ENCODE measurements at regions of chr14 and their contacts with region 1.

Region 1: DNA sequence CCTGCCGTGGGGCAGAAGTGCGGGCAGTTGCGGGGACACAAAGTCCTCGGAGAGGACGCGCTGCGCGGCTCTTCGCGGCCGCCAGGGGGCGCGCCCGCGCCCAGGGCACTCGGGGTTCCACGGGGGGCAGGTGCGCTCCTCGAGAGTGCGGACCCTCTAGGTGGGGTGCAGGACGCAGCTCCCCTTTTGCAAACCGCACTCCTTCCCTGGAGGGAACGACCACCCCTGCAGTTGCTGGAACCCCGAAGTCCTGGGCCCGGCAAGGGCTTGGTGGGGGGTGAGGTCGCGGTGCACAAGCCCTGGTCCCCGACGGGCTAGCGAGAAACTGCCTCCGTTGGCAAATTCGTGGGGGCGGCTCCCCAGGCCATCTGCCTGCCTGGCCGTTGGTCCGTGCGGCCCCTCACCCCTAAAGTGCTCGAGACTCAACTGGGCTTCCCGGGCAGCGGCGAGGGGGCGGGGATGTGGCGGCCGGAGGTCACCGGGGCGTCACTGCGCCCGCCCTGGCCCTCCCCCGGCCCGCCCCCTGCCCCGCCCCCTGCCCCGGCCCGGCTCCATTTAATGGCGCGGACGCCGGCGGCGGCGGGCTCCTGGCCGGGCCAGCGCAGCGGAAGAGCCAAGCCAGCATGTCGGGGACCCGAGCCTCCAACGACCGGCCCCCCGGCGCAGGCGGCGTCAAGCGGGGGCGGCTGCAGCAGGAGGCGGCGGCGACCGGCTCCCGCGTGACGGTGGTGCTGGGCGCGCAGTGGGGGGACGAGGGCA is at the start of gene ADSS1:
- DNase-seq: peak in 1 of 2 donors; percentile 85
- H3K4me3 ChIP-seq: peak within 1 kb of the TSS; percentile 83 to 94
- H3K27ac ChIP-seq: peak within 1 kb of the TSS; percentile 84 to 89
- H3K4me1 ChIP-seq: peaks cover 24 to 47% of the 10 kb centered on the region in 2 donors
- H3K27me3 ChIP-seq: no peaks in the 10 kb centered on the region
- CTCF ChIP-seq: peak; percentile 80 to 84 (median 83)
- total RNA-seq, gene ADSS1: 30.2 TPM

Region 2: DNA sequence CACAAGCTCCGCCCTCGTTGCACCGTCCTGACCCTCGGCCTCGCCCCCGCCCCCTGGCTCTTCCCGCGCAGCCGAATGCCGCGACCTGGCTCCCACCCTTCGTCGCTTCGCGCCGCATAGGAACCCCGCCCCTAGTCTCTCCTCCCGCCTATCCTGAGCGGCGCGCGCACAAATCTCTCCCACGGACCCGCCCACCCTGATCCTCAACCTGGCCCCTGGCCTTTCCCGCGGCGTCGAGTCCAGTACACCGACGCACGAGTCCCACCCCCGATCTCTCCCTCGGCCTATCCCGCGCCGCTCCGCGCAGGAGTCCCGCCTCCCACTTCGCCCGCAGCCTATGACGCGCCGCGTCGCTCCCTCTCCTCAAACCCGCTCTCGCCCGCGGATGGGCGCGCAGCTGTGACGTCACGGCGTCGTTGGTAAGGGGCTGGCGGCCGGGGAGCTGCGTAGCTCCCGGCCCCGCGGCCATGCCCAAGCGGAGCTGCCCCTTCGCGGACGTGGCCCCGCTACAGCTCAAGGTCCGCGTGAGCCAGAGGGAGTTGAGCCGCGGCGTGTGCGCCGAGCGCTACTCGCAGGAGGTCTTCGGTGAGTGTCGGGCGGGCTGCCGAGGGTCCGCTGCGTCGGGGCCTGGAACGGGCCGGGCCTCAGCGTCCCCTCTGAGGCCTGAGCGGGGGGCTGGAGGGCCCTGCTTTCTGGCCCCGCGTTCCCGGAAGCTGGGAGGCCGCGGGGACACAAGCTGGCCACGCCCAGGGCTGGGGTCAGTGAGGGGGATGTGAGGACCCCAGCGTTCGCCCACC is 29.1 kb after region 1 on chr14 and contains the start of gene SIVA1:
- intact Hi-C with region 1: loop called (anchors 1 kb)
- DNase-seq: peak; percentile 98 to 100
- H3K4me3 ChIP-seq: peak within 1 kb of the TSS; percentile 89 to 99
- H3K27ac ChIP-seq: peak within 1 kb of the TSS; percentile 81 to 95
- H3K4me1 ChIP-seq: peaks cover 40 to 55% of the 10 kb centered on the region in 2 donors
- H3K27me3 ChIP-seq: no peaks in the 10 kb centered on the region
- CTCF ChIP-seq: no peak
- total RNA-seq, gene SIVA1: 410 TPM

Measured in ascending aorta (tissue), 2 donors.